AG04449 (cell line): ENCODE measurements at regions of chr2 and their contacts with region 1.

Region 1: DNA sequence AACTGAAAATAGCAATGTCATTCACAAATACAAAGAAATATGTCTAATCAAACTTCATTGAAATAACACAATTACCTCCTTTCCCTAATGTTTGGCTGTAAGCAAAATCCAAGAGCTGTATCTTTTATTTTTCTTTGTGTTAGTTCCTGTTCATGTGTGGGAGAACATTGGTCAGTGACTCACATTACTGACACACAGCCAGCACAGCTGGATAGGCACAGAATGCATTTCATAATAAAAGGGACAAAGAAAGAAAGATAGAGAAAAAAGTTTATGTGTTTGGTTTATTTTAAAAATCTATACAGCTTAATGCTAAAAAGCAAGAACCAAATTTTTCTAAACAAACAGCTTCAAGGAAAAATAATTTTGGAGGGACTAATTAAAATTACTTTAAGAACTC is 185.6 kb upstream of the COL3A1 start:
- DNase-seq: no peak
- H3K4me3 ChIP-seq: no peak overlapping the region
- CTCF ChIP-seq: no peak

Region 2: GRCh38 chr2:188142636-188143295 is 645.9 kb before region 1 on chr2:
- CTCF ChIA-PET with region 1: no interaction called
- POLR2A ChIA-PET with region 1: no interaction called
- DNase-seq: peak; percentile 7
- H3K4me3 ChIP-seq: no peak overlapping the region
- CTCF ChIP-seq: no peak

Region 3: DNA sequence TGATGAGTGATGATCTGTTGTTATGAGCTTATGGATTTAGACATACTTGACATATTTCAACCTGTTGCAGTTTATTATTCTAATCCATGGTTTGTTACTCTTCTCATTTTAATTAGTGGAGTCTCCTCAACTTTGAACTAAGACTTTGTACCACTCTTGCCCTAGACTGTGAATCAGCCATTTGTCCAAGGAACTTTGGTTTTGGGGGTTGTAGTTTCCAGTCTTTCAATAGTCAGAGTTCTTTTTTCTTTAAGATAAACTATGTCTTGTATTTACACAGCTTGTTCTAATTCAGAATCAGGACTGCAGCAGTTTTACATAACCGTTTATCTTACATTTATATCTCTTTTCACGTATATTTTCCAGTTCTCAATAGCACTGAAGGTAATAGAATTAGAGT is 363.4 kb before region 1 on chr2:
- CTCF ChIA-PET with region 1: no interaction called
- POLR2A ChIA-PET with region 1: no interaction called
- DNase-seq: no peak
- H3K4me3 ChIP-seq: no peak overlapping the region
- CTCF ChIP-seq: no peak

Region 4: DNA sequence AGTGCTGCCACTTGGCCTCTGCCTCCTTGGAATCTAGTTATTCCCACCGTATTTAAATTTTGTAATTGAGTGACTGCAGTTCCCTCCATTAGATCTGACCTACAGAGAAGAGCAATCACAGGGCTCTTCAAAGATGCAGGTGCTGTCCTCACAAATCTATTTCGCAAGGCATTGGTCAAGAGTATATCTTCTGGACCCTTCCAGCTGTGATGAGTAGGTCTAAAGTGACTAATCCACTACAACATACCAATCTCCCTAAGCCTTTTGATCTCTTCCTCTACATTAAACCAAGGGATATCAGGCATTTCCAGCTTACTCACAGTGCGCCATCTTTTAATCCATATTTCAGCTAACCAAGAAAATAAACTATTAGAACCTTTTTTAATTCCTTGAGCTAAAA is 120.4 kb after region 1 on chr2:
- CTCF ChIA-PET with region 1: no interaction called
- POLR2A ChIA-PET with region 1: no interaction called
- DNase-seq: no peak
- H3K4me3 ChIP-seq: no peak overlapping the region
- CTCF ChIP-seq: no peak

Region 5: GRCh38 chr2:188978291-188979081 is 189.9 kb after region 1 on chr2:
- CTCF ChIA-PET with region 1: interaction called, 29 read pairs
- POLR2A ChIA-PET with region 1: interaction called, 7 read pairs
- DNase-seq: no peak
- H3K4me3 ChIP-seq: peak overlapping the region; percentile 60
- CTCF ChIP-seq: peak; percentile 25